Activated T-helper 1 cell treated with anti-CD3 and anti-CD28 coated beads, Interleukin-12 subunit alpha, Interleukin-12 subunit beta, Interleukin-2, Interleukin-4 antibody, amounts not matched to agents 30 ng/mL and 10 ng/mL and 1 ng/mL, durations not matched to agents 14 hours and 24 hours and 36 hours (primary cell): ENCODE measurements at regions of chr2 and their contacts with region 1.

Region 1: GRCh38 chr2:162058973-162059668 is 14.9 kb downstream of the DPP4 start:
- DNase-seq: peak; percentile 25
- H3K4me3 Mint-ChIP-seq: peak overlapping the region; percentile 75
- H3K27ac Mint-ChIP-seq: peak overlapping the region; percentile 96
- H3K4me1 Mint-ChIP-seq: peaks cover 93% of the 10 kb centered on the region
- H3K27me3 Mint-ChIP-seq: no peaks in the 10 kb centered on the region

Region 2: GRCh38 chr2:161160226-161161069 is 898.7 kb before region 1 on chr2 and contains the start of gene TANK:
- intact Hi-C with region 1: loop called (anchors 5 kb)
- DNase-seq: peak; percentile 88
- H3K4me3 Mint-ChIP-seq: peak within 1 kb of the TSS; percentile 97
- H3K27ac Mint-ChIP-seq: peak within 1 kb of the TSS; percentile 99
- H3K4me1 Mint-ChIP-seq: peaks cover 81% of the 10 kb centered on the region
- H3K27me3 Mint-ChIP-seq: no peaks in the 10 kb centered on the region
- total RNA-seq, gene TANK: 136 and 141 TPM in 2 replicates

Region 3: DNA sequence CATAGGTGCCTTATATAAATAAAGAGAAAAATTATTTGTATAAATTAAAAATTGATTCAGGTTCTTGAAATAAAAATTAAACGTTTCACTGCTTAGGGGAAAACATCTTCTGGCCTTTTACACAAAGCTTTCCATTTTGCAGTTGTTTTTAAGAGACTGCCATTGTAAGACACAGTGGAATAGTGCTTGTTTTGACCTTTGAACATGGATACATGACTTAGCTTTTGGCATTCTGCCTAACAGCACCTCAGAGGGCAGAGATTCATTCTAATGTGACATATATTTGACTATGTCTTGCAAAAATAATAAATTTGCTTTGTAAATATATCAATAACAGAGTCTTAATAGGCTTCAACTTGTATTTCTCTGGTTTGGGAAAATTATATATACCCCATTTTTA is 292.8 kb before region 1 on chr2:
- intact Hi-C with region 1: no loop called
- DNase-seq: no peak
- H3K4me3 Mint-ChIP-seq: no peak overlapping the region
- H3K27ac Mint-ChIP-seq: no peak overlapping the region
- H3K4me1 Mint-ChIP-seq: no peaks in the 10 kb centered on the region
- H3K27me3 Mint-ChIP-seq: peaks cover 2% of the 10 kb centered on the region

Region 4: GRCh38 chr2:161905389-161906046 is 153.6 kb before region 1 on chr2:
- intact Hi-C with region 1: loop called (anchors 5 kb)
- DNase-seq: no peak
- H3K4me3 Mint-ChIP-seq: peak overlapping the region; percentile 53
- H3K27ac Mint-ChIP-seq: peak overlapping the region; percentile 59
- H3K4me1 Mint-ChIP-seq: peaks cover 25% of the 10 kb centered on the region
- H3K27me3 Mint-ChIP-seq: peaks cover 3% of the 10 kb centered on the region

Region 5: GRCh38 chr2:161992526-161992925 is 66.6 kb before region 1 on chr2:
- intact Hi-C with region 1: loop called (anchors 1 kb)
- DNase-seq: peak; percentile 61
- H3K4me3 Mint-ChIP-seq: peak overlapping the region; percentile 83
- H3K27ac Mint-ChIP-seq: peak overlapping the region; percentile 96
- H3K4me1 Mint-ChIP-seq: peaks cover 78% of the 10 kb centered on the region
- H3K27me3 Mint-ChIP-seq: no peaks in the 10 kb centered on the region

Region 6: GRCh38 chr2:162025121-162026031 is 33.7 kb before region 1 on chr2:
- intact Hi-C with region 1: loop called (anchors 1 kb)
- DNase-seq: no peak
- H3K4me3 Mint-ChIP-seq: peak overlapping the region; percentile 52
- H3K27ac Mint-ChIP-seq: peak overlapping the region; percentile 70
- H3K4me1 Mint-ChIP-seq: peaks cover 74% of the 10 kb centered on the region
- H3K27me3 Mint-ChIP-seq: no peaks in the 10 kb centered on the region

Region 7: DNA sequence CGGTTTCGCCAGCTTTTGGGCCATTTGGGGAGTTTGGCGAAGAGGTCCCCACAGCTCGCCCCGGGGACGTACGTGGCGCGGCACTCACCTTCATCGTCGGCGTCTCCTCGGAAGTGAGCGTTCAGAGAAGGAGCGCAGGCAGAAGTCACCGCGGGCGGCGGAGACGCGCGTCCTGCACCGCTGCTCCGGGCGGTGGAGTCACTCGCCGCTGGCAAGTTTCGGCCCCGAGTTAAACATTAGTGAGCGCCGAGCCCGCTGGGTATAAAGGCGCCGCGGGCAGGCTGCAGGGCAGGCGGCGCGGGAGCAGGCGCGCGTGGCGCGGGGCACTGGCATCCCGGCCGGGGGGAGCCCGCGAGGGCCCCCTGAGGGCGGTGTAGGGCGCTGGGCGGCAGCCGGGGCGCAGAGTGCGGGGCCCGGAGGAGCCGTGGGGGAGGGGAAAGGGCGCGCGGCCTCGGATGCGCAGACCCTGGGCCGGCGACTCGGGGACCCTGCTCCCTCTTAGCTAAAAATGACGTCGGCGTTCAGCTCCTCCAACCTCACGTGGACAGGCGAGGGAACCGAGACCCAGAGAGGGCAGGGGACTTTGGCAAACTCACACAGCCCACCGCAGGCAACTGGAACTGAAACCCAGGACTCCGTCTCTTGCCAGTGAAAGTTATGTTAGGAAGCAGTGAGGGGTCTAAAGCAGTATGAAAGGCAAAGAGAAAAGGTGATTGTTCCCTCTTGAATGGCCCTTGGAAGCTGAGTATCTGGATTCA is 14.9 kb after region 1 on chr2 and contains the start of gene DPP4:
- intact Hi-C with region 1: loop called (anchors 1 kb)
- DNase-seq: peak; percentile 42
- H3K4me3 Mint-ChIP-seq: peak within 1 kb of the TSS; percentile 98
- H3K27ac Mint-ChIP-seq: peak within 1 kb of the TSS; percentile 93
- H3K4me1 Mint-ChIP-seq: peaks cover 55% of the 10 kb centered on the region
- H3K27me3 Mint-ChIP-seq: no peaks in the 10 kb centered on the region
- total RNA-seq, gene DPP4: 94.4 and 99.9 TPM in 2 replicates

Region 8: GRCh38 chr2:162318328-162319180 is 259.4 kb after region 1 on chr2 and contains the start of gene IFIH1:
- intact Hi-C with region 1: loop called (anchors 1 kb)
- DNase-seq: peak; percentile 79
- H3K4me3 Mint-ChIP-seq: peak within 1 kb of the TSS; percentile 93
- H3K27ac Mint-ChIP-seq: peak within 1 kb of the TSS; percentile 100
- H3K4me1 Mint-ChIP-seq: peaks cover 65% of the 10 kb centered on the region
- H3K27me3 Mint-ChIP-seq: no peaks in the 10 kb centered on the region
- total RNA-seq, gene IFIH1: 27.9 TPM in 2 replicates

Region 9: GRCh38 chr2:162363361-162363760 is 304.2 kb after region 1 on chr2:
- intact Hi-C with region 1: no loop called
- DNase-seq: no peak
- H3K4me3 Mint-ChIP-seq: no peak overlapping the region
- H3K27ac Mint-ChIP-seq: no peak overlapping the region
- H3K4me1 Mint-ChIP-seq: no peaks in the 10 kb centered on the region
- H3K27me3 Mint-ChIP-seq: no peaks in the 10 kb centered on the region